Mammary epithelial cell (primary cell): ENCODE measurements at regions of chr11 and their contacts with region 1.

Region 1: DNA sequence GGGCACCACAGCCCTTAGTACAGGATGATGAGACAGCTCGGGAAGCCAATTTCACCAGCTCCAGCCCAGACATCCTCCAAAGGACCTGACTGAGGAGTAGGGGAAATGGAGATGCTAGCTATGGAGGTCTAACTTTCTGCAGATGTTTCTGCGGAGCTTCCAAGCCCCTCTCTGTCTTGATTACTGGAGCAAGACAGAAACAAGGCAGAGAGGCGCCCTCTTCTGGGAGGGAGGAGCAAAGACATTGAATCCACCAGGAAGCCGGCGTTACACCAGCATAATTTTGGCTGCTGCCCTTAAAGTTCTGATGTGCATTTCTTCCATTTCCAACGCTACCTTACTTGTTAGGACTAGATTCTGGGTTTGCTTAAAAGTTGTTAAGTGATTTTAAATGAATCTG is 107.3 kb upstream of the HSD17B12 start:
- DNase-seq: no peak
- H3K4me3 ChIP-seq: no peak overlapping the region
- H3K27ac ChIP-seq: no peak overlapping the region
- H3K4me1 ChIP-seq: peaks cover 9% of the 10 kb centered on the region
- H3K27me3 ChIP-seq: peaks cover 43% of the 10 kb centered on the region
- CTCF ChIP-seq: peak; percentile 70 to 78

Region 2: GRCh38 chr11:43523632-43524031 is 49.6 kb before region 1 on chr11:
- CTCF ChIA-PET with region 1: no interaction called
- dilution Hi-C with region 1: loop called (anchors 5 kb)
- in situ Hi-C with region 1: no loop called
- intact Hi-C with region 1: no loop called
- DNase-seq: no peak
- H3K4me3 ChIP-seq: no peak overlapping the region
- H3K27ac ChIP-seq: no peak overlapping the region
- H3K4me1 ChIP-seq: no peaks in the 10 kb centered on the region
- H3K27me3 ChIP-seq: no peaks in the 10 kb centered on the region
- CTCF ChIP-seq: no peak

Region 3: GRCh38 chr11:43638717-43639116 is 65.5 kb after region 1 on chr11:
- CTCF ChIA-PET with region 1: no interaction called
- dilution Hi-C with region 1: loop called (anchors 5 kb)
- in situ Hi-C with region 1: no loop called
- intact Hi-C with region 1: no loop called
- DNase-seq: no peak
- H3K4me3 ChIP-seq: no peak overlapping the region
- H3K27ac ChIP-seq: no peak overlapping the region
- H3K4me1 ChIP-seq: no peaks in the 10 kb centered on the region
- H3K27me3 ChIP-seq: peaks cover 2% of the 10 kb centered on the region
- CTCF ChIP-seq: no peak